ENCODE measurements at regions of chr3 and their contacts with region 1.

Region 1: DNA sequence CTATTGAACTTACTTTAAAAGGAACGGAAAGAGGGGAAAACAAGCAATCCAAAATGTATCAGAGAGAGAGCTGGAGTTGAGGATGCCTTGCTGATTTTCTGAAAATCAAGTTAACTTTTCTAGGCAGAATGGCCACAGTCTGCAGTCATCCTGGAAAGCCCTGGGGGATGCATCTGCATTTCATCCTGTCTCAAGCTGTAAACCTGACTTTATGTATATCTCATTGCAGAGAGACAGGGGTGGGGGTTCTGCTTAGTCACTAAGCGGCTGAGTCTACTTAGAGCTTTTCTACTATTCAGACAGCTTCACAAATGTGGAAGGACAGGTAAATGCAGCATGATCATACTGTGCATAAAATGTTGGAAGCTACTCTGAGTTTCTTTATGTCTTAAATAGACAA is 41.4 kb downstream of the MRPS25 start:
- DNase-seq: no peak
- H3K4me3 ChIP-seq: no peak overlapping the region
- H3K27ac ChIP-seq: no peak overlapping the region
- H3K4me1 ChIP-seq: no peaks in the 10 kb centered on the region
- CTCF ChIP-seq: no peak

Region 2: DNA sequence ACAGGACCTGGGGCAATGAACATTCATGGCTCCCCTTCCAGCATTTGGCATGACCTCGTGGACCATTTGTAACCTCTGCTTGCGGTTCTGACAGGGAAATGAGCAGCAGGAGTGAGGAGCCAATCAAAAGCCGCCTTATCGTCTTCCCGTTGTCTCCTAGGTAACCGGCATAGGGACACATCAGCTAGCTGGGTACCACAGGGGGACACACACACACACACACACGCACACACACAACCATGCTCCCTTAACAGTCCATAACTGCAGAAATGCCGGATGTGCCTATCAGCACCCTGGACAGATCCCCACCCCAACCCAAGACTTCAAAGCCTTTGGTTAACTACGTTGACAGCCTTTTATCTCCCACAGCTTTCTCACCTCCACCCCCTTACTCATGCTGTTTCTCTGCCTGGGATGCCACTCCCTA is 425.6 kb before region 1 on chr3:
- CTCF ChIA-PET with region 1: no interaction called
- POLR2A ChIA-PET with region 1: no interaction called
- intact Hi-C with region 1: no loop called
- DNase-seq: peak; percentile 40
- H3K4me3 ChIP-seq: no peak overlapping the region
- H3K27ac ChIP-seq: no peak overlapping the region
- H3K4me1 ChIP-seq: no peaks in the 10 kb centered on the region
- CTCF ChIP-seq: no peak

Region 3: DNA sequence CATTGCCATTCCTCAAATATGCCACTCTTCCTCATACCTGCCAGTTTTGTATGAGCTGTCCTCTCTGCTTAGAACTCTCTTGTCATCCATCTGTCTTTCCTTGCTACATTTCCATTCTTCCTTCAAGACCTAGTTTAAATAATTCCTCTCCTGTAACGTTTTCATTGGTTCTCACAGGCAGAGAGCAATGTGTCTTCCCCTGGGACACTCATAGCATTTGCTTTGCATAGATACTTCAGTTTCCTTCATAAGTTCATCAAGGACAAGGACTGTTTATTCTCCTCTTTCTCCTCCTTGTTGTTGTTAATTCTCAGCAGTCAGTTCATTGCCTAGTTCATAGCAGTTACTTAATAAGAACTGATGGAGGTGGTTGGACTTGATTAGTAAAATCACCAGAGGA is 65.8 kb before region 1 on chr3:
- CTCF ChIA-PET with region 1: no interaction called
- POLR2A ChIA-PET with region 1: no interaction called
- intact Hi-C with region 1: loop called (anchors 2 kb)
- DNase-seq: peak; percentile 20
- H3K4me3 ChIP-seq: no peak overlapping the region
- H3K27ac ChIP-seq: no peak overlapping the region
- H3K4me1 ChIP-seq: peaks cover 31% of the 10 kb centered on the region
- CTCF ChIP-seq: no peak

Region 4: GRCh38 chr3:15064299-15064834 is 40.6 kb after region 1 on chr3:
- CTCF ChIA-PET with region 1: no interaction called
- POLR2A ChIA-PET with region 1: no interaction called
- intact Hi-C with region 1: no loop called
- DNase-seq: peak; percentile 54
- H3K4me3 ChIP-seq: peak overlapping the region; percentile 96
- H3K27ac ChIP-seq: peak overlapping the region; percentile 42
- H3K4me1 ChIP-seq: peaks cover 16% of the 10 kb centered on the region
- CTCF ChIP-seq: no peak